Cardiac septum (tissue), 1 donor: ENCODE measurements at regions of chr1 and their contacts with region 1.

Region 1: DNA sequence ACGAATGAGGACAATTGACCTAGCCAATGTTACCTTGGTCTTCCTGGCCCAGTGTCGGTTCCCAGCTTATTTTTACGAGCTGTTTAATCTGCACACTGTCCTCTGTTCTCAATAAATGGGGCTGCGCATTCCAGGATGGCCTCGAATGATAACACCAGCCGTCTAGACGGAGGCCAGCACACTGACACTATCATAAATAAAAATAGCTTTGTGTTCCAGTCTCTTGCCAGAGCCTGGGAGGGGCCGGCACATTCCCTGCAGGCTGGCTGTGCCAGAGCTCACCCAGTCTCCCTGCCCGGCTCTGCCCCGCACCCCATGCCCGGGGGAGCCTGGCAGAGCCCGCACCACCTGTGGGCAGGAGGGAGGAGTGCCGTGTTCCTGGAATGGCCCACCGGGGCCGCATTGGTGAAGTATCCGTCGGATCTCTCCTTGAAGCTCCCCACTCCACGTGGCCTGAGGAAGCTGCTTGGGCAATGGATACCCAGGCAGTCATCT is 92.1 kb downstream of the SPSB1 start:
- DNase-seq: peak; percentile 86

Region 2: GRCh38 chr1:9438431-9439073 is 53.8 kb after region 1 on chr1:
- intact Hi-C with region 1: loop called (anchors 2 kb)
- DNase-seq: no peak

Region 3: GRCh38 chr1:9449106-9449627 is 64.4 kb after region 1 on chr1:
- intact Hi-C with region 1: loop called (anchors 2 kb)
- DNase-seq: no peak